Heart left ventricle (tissue), 16 donors: ENCODE measurements at regions of chr13 and their contacts with region 1.

Region 1: DNA sequence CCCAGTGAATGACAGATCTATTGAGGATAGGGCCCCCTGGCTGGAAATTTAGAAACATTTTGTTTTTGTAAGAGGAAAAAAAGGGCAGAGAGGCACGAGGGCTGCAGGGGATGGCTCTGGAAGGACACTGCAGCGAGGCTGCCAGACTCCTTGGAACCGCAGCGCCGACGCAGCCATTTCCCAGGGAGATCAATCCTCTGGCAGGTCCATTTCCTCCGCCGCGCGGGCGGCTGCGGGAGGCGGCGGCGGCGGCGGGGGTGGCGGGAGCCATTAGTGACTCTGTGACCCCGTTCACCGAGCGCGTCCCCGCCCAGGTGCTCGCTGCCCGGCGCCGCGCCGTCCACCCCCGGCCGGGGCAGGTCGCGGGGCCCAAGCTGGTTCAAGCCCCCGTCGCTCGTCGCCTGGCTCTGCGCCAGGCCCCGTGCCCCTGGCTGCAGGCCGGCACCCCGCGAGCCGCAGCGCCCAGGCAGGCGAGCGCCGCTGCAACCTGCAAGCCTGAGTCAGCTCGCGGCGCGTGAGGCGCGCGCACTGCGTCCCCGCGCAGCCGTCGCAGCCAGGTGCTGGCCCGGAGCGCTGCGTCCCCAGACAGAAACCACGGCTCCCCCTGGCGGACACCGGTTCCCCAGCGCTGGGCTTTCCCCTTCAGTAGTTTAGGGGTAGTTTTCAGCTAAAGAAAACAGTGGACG is 192.6 kb downstream of the KATNAL1 start:
- DNase-seq: peak; percentile 85 to 92 (median 88)
- ATAC-seq: peak; percentile 73 to 93 (median 86)
- H3K4me3 ChIP-seq: peak overlapping the region; percentile 12 to 82 (median 60)
- H3K27ac ChIP-seq: peak overlapping the region in 5 of 12 donors; percentile 1 to 66 (median 41)
- H3K4me1 ChIP-seq: peaks cover 0 to 26% (median 12%) of the 10 kb centered on the region in 12 donors
- H3K27me3 ChIP-seq: no peaks in the 10 kb centered on the region
- CTCF ChIP-seq: peak; percentile 81 to 98 (median 90)
- POLR2A ChIP-seq: no peak

Region 2: GRCh38 chr13:29384466-29384865 is 730.2 kb before region 1 on chr13:
- intact Hi-C with region 1: no loop called
- DNase-seq: peak in 2 of 5 donors; percentile 28 to 54
- ATAC-seq: peak; percentile 88 to 95 (median 94)
- H3K4me3 ChIP-seq: no peak overlapping the region
- H3K27ac ChIP-seq: peak overlapping the region in 3 of 12 donors; percentile 17 to 37 (median 25)
- H3K4me1 ChIP-seq: peaks cover 0 to 14% (median 0%) of the 10 kb centered on the region in 12 donors
- H3K27me3 ChIP-seq: no peaks in the 10 kb centered on the region
- CTCF ChIP-seq: no peak
- POLR2A ChIP-seq: no peak

Region 3: DNA sequence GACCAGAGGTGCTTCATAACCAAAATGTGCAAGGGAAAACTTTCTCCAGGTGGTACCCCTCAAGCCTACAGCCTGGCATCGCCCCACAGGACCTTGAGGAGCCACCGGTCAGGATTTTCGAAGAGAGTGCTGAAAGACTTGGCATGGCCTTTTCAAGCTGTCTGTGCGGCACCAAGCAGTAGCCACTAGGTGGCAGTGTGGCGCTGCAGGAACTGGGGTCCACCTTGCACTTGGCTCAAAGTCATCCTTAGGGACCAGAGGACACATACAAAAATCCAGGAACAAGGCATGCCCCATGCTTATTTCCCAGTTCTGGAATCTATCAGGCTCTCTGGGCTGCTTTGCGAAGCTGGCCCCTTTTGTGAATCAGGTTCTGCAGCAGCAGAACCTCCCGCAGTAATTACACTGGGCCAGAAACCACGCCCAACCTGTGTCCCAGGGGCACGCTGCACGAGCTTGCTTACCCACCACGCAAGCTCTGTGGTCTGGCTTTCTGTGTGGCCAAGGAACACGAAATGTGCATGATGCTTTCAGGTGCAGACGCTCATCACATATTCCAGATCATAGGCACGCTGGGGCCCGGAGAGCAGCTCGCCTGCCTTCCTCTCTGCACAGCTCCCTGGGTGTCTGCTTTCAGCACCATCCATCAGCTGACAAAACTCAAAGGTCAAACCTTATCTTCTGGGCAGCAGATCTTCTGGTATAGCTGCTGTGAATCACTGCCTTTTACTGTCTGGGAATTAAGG is 606.4 kb before region 1 on chr13:
- intact Hi-C with region 1: loop called (anchors 1 to 5 kb)
- DNase-seq: peak; percentile 81 to 90 (median 84)
- ATAC-seq: peak; percentile 79 to 87 (median 86)
- H3K4me3 ChIP-seq: peak overlapping the region in 2 of 12 donors; percentile 8 to 19
- H3K27ac ChIP-seq: peak overlapping the region in 6 of 12 donors; percentile 10 to 68 (median 27)
- H3K4me1 ChIP-seq: peaks cover 0 to 24% (median 15%) of the 10 kb centered on the region in 12 donors
- H3K27me3 ChIP-seq: peaks cover 0 to 12% (median 0%) of the 10 kb centered on the region in 9 donors
- CTCF ChIP-seq: peak; percentile 94 to 99 (median 98)
- POLR2A ChIP-seq: no peak

Region 4: GRCh38 chr13:29583073-29583785 is 531.5 kb before region 1 on chr13:
- intact Hi-C with region 1: loop called in 1 of 10 experiments (anchors 10 kb)
- DNase-seq: no peak
- ATAC-seq: no peak
- H3K4me3 ChIP-seq: no peak overlapping the region
- H3K27ac ChIP-seq: no peak overlapping the region
- H3K4me1 ChIP-seq: peaks cover 0 to 40% (median 7%) of the 10 kb centered on the region in 12 donors
- H3K27me3 ChIP-seq: no peaks in the 10 kb centered on the region
- CTCF ChIP-seq: no peak
- POLR2A ChIP-seq: no peak

Region 5: DNA sequence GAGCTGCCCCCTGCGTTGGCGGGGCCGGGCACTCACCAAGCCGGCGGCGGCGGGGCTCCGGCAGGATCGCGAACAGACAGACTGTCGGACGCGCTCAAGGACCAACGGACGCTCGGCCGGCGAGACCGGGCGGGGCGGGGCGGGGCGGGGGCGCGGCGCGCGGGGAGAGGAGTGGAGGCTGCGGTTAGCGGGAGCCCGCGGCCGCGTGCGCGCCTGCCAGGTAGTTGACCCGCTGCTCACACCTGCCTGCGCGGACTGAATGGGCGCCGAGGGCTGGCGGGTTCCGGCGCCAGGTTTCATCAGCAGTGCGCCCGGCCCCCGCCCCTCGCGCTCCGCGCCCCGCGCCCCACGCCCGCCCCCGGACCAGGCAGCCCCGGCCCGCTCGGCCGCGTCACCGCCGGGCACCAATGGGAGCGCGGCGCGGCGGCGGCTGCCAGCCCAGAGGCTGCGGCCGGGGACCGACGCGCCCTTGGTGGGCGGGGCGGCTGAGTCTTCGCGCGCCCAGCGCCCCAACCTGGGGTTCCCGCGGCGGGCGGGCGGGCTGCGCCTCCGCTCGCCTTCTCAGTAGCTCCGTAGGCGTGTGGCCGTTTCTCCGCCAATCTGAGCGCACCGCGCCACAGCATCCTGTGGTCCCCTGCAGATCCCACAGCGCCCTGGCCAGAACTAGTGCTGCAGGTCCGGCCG is 519.2 kb before region 1 on chr13 and contains the start of gene SLC7A1:
- intact Hi-C with region 1: loop called in 1 of 10 experiments (anchors 10 kb)
- DNase-seq: peak; percentile 74 to 87 (median 75)
- ATAC-seq: peak; percentile 64 to 95 (median 92)
- H3K4me3 ChIP-seq: peak within 1 kb of the TSS; percentile 51 to 98 (median 81)
- H3K27ac ChIP-seq: peak within 1 kb of the TSS; percentile 7 to 94 (median 82)
- H3K4me1 ChIP-seq: peaks cover 0 to 20% (median 5%) of the 10 kb centered on the region in 12 donors
- H3K27me3 ChIP-seq: peaks cover 0 to 6% (median 0%) of the 10 kb centered on the region in 9 donors
- CTCF ChIP-seq: peak in 1 of 12 donors; percentile 25
- POLR2A ChIP-seq: no peak
- total RNA-seq, gene SLC7A1: 8.3 to 66.7 (median 14.3) TPM

Region 6: DNA sequence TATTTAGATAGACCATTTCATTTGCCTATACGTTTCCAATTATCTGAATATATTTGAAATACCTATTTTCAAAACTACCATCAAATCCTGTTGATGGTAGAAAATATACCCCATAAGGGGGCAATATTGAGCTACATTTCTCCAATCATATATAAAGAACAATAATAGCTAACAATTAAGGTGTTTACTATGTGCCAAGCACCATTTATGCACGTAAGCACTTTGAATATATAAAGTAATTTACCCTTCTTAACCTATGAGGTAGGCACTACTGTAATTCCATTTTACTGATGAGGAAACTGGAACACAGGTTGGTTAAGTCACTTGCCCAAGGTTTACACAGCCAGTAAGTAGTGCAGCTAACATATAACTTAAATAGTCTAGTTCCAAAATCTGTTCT is 343.5 kb before region 1 on chr13:
- intact Hi-C with region 1: loop called (anchors 1 to 5 kb)
- DNase-seq: no peak
- ATAC-seq: peak in 1 of 4 donors; percentile 14
- H3K4me3 ChIP-seq: no peak overlapping the region
- H3K27ac ChIP-seq: no peak overlapping the region
- H3K4me1 ChIP-seq: no peaks in the 10 kb centered on the region
- H3K27me3 ChIP-seq: no peaks in the 10 kb centered on the region
- CTCF ChIP-seq: peak; percentile 22 to 68 (median 54)
- POLR2A ChIP-seq: no peak

Region 7: DNA sequence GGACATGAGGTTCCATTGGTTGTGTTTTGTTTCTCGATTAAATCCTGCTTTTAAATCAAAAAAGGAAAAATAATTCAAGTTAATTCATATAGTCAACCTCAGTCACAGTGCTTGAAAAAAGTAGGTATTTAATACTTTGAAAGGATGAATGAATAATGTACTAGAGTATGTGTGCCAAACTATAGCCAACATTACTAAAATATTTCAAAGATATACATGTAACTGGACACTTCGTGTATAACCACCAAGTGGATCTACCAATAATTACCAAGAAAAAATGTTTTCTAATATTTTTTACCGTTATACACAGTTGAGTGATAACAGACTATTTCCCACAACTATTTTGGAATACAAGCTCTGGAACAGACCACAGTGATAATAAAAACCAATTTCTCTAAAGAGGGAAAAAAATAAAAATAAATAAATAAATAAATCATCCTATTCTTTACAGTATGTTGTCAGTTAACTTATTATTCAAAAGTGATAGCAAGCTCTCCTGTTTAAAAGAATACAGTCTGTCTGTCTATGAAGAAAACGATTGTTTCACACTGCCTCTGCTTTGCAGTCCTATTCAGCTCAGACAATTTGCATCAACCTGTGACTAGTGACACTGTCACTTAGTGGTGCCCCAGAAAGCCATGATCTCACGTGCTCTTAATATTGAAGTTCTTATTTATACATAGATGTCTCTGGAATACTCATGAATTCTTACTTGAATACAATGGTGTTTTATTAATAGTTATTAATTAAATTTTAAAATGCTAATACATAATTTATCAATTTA is 322.5 kb before region 1 on chr13:
- intact Hi-C with region 1: no loop called
- DNase-seq: no peak
- ATAC-seq: no peak
- H3K4me3 ChIP-seq: no peak overlapping the region
- H3K27ac ChIP-seq: no peak overlapping the region
- H3K4me1 ChIP-seq: peaks cover 0 to 17% (median 2%) of the 10 kb centered on the region in 12 donors
- H3K27me3 ChIP-seq: no peaks in the 10 kb centered on the region
- CTCF ChIP-seq: no peak
- POLR2A ChIP-seq: no peak

Region 8: DNA sequence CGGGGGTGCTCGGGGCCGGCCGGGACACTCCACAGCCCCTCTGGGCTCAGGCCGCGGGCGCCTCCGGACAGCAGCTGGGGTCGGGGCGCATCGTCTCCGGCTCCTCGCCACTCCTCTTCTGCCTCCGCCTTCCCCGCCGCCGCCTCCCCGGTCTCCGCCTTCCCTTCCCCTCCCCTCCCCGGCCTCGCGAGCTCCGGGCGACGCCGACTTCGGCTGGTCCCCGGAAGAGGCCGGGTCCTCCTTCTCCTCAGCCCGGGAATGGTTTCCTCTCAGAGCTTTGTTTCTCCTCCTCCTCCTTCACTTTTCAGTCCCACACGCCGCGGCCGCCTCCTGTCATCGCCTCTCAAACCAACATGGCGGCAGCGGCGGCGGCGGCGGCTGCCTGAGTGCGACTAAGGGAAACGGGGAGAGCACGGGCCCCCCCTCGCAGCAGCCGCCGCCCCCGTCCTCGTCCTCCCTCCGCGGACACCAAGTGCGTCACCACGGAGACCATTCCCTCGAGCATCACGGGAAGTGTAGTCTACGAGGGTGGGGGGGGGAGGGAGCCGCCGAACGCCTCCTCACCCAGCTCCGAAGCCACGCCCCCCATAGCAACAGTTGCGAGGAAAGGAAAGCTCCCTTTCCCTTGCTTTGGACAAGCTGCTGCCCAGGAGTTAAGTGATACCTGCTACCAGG is 264.4 kb before region 1 on chr13 and contains the start of gene UBL3:
- intact Hi-C with region 1: loop called (anchors 2 to 5 kb)
- DNase-seq: peak; percentile 97
- ATAC-seq: peak; percentile 96 to 98 (median 98)
- H3K4me3 ChIP-seq: peak within 1 kb of the TSS; percentile 64 to 96 (median 89)
- H3K27ac ChIP-seq: peak within 1 kb of the TSS; percentile 96 to 99 (median 98)
- H3K4me1 ChIP-seq: peaks cover 0 to 29% (median 19%) of the 10 kb centered on the region in 12 donors
- H3K27me3 ChIP-seq: no peaks in the 10 kb centered on the region
- CTCF ChIP-seq: no peak
- POLR2A ChIP-seq: peak in 1 of 2 donors; percentile 77
- total RNA-seq, gene UBL3: 19.0 to 27.7 (median 21.2) TPM

Region 9: GRCh38 chr13:29935309-29935981 is 179.3 kb before region 1 on chr13:
- intact Hi-C with region 1: loop called in 2 of 10 experiments (anchors 5 to 10 kb)
- DNase-seq: peak in 1 of 5 donors; percentile 30
- ATAC-seq: peak in 2 of 4 donors; percentile 44 to 57
- H3K4me3 ChIP-seq: peak overlapping the region in 1 of 12 donors; percentile 27
- H3K27ac ChIP-seq: peak overlapping the region in 1 of 12 donors; percentile 4
- H3K4me1 ChIP-seq: peaks cover 0 to 6% (median 0%) of the 10 kb centered on the region in 12 donors
- H3K27me3 ChIP-seq: peaks cover 0 to 13% (median 0%) of the 10 kb centered on the region in 9 donors
- CTCF ChIP-seq: no peak
- POLR2A ChIP-seq: no peak

Region 10: GRCh38 chr13:30292325-30292724 is 177.6 kb after region 1 on chr13:
- intact Hi-C with region 1: no loop called
- DNase-seq: no peak
- ATAC-seq: no peak
- H3K4me3 ChIP-seq: no peak overlapping the region
- H3K27ac ChIP-seq: no peak overlapping the region
- H3K4me1 ChIP-seq: peaks cover 0 to 35% (median 10%) of the 10 kb centered on the region in 12 donors
- H3K27me3 ChIP-seq: no peaks in the 10 kb centered on the region
- CTCF ChIP-seq: no peak
- POLR2A ChIP-seq: no peak